RWPE1 (cell line): ENCODE measurements at regions of chr1 and their contacts with region 1.

Region 1: DNA sequence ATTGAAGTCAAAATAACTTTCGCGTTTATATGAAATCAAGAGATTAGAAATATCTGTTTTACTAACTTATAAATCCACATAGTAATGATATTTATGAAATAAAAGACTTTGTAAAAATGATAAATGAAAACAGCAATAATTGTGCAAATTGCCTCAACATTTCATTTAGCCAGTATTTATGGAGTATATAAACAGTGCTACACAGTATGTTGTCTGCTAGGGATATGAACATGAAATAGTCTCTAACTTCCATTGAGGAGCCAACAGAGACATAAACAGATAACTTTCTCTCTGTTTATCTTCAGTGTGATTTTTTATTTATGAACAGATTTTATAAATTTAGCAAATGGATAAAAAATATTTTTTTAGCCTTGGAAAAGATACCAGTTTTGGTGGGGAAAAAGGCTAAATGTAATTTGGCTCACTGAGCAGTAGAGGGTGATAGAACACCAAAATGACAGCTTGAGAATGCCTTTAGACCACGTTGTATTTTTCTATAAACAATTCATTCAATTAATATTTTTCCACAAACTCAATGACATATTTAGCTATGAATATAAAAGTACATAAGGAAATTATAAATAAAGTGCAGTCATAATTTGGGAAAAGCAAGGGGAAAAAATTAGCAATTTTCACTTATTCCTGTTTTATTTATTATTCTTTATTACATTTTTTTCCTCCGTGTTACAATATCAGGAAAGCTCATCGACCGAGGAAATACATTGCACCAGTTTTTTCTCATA is 47.5 kb upstream of the EEIG2 start:
- DNase-seq: peak; percentile 42
- H3K27ac ChIP-seq: no peak overlapping the region
- CTCF ChIP-seq: peak; percentile 82

Region 2: GRCh38 chr1:108314815-108315214 is 197.6 kb before region 1 on chr1:
- CTCF ChIA-PET with region 1: no interaction called
- POLR2A ChIA-PET with region 1: no interaction called
- DNase-seq: no peak
- H3K27ac ChIP-seq: no peak overlapping the region
- CTCF ChIP-seq: no peak

Region 3: GRCh38 chr1:108478429-108479015 is 33.9 kb before region 1 on chr1:
- CTCF ChIA-PET with region 1: no interaction called
- POLR2A ChIA-PET with region 1: no interaction called
- DNase-seq: no peak
- H3K27ac ChIP-seq: no peak overlapping the region
- CTCF ChIP-seq: no peak

Region 4: GRCh38 chr1:108559215-108560186 is 47.1 kb after region 1 on chr1 and contains the start of gene EEIG2:
- CTCF ChIA-PET with region 1: interaction called, 18 read pairs
- POLR2A ChIA-PET with region 1: no interaction called
- DNase-seq: peak; percentile 82
- H3K27ac ChIP-seq: peak within 1 kb of the TSS; percentile 76
- CTCF ChIP-seq: peak; percentile 94

Region 5: DNA sequence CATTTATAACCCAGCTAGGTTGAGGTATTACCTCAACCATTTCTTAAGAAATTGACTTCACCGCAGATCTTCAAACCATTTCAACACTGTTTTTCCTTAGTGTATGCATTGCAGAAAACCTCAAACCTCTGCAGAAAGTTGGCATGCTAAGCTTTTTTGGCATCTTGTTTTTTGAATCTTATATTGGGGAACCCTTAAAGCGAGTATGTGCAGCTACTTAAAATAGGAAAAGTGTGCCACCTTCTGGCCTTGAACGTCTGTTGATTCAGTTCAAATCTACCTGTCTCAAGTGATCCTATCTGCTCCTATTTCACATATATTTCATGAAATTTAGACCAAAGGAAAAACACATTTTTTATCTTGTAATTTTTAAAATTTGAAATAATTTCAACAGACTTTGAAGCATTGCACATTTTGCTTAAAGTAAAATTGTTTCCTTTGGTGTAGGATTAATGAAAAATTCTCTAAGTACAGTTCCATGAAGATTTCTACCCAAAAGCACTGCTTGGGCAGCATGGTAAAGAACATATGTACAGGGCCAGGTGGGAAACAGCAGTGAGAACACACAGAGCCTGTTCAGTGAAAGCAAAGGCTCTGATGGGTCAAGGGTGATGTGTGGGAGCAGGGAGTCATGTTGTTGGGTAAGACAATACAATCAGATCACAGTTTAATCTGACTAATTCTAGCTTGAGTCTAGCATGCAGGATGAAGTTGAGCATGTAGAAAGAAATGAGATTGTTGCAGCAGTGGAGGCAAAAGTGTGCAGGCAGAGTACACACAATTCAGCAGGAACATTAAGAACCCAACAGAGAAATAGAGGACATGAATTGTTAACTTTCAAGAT is 131.3 kb after region 1 on chr1:
- CTCF ChIA-PET with region 1: interaction called, 22 read pairs
- POLR2A ChIA-PET with region 1: no interaction called
- DNase-seq: peak; percentile 52
- H3K27ac ChIP-seq: no peak overlapping the region
- CTCF ChIP-seq: peak; percentile 62